Caco-2 (cell line): ENCODE measurements at regions of chr17 and their contacts with region 1.

Region 1: DNA sequence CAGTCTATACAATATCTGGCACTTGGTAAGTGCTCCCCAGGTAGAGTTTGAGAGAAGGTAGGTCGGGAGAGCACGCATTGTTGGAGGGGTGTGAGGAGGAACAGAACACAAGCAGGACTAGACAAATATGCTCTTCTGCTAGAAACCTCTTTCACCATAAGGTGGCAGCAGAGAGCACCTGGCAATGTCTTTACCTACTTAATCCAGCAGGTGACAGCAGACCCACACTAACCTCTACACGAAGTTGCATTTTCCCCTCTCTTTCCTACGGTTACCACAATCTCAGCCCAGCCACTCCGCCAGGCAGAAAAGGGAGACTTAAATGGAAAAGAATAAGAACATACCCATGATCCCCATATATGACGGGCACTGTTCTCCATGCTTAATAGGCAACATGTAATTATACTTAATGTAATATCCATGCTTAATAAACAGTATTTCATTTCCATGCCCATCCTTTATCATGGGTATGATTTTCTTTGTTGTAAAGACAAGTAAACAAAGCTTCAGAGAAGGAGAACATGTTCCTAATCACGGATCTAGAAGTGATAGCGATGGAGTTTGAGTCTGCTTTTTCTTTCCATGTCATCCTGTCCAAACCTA is 55.1 kb upstream of the CCL2 start:
- DNase-seq: peak; percentile 73 to 82
- H3K4me3 ChIP-seq: no peak overlapping the region
- H3K4me3 Mint-ChIP-seq: no peak overlapping the region
- H3K27ac Mint-ChIP-seq: no peak overlapping the region
- H3K4me1 ChIP-seq: no peaks in the 10 kb centered on the region
- H3K4me1 Mint-ChIP-seq: no peaks in the 10 kb centered on the region
- H3K27me3 ChIP-seq: no peaks in the 10 kb centered on the region; the same call in 1 of the 2 replicates
- H3K27me3 Mint-ChIP-seq: peaks cover 13% of the 10 kb centered on the region
- CTCF ChIP-seq: peak; percentile 100

Region 2: DNA sequence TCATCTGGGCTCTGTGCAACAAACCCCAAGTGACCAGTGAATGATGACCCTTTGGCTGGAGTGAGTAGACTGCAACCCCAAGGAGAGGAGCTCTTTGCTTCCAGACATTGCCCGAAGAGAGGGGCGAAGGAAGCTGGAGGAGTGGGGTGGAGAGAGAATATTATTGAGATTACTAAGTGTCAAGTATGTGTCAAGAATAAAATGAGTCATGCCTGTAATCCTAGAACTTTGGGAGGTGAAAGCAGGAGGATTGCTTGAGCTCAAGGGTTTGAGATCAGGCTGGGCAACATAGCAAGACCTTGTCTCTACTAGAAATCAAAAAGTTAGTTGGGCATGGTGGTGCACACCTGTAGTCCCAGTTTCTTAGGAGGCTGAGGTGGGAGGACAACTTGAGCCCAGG is 86.9 kb before region 1 on chr17:
- CTCF ChIA-PET with region 1: no interaction called
- POLR2A ChIA-PET with region 1: no interaction called
- intact Hi-C with region 1: no loop called
- DNase-seq: no peak
- H3K4me3 ChIP-seq: no peak overlapping the region
- H3K4me3 Mint-ChIP-seq: no peak overlapping the region
- H3K27ac Mint-ChIP-seq: no peak overlapping the region
- H3K4me1 ChIP-seq: no peaks in the 10 kb centered on the region
- H3K4me1 Mint-ChIP-seq: no peaks in the 10 kb centered on the region
- H3K27me3 ChIP-seq: peaks cover 2% of the 10 kb centered on the region
- H3K27me3 Mint-ChIP-seq: peaks cover 29% of the 10 kb centered on the region
- CTCF ChIP-seq: no peak

Region 3: DNA sequence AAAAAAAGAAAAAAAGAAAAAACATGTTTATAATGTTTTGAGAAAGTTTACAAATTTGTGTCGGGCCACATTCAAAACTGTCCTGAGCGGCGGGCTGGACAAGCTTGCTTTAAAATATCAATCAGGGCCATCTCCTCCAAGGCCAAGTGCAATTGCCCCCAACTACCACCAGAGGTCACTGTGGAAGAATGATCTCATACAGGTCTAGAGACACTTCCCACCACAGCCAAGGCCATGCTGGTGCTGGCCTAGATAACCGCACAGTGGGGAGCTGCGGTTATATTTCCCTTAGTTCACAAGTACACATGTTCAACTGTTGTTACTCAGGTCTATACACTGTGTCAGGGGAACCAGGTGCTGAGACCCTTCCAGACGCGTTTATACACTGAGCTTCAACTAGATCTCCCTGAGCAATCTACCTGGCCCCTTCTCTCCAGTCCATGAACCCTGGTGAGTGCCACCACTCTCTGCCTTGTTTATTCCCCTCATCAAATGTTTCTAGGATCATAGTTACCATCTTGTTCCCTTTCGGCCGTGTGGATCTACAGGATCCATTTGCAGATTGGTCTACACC is 28.7 kb before region 1 on chr17:
- CTCF ChIA-PET with region 1: interaction called, 4 read pairs
- POLR2A ChIA-PET with region 1: no interaction called
- intact Hi-C with region 1: loop called (anchors 1 kb)
- DNase-seq: peak; percentile 59 to 72
- H3K4me3 ChIP-seq: no peak overlapping the region
- H3K4me3 Mint-ChIP-seq: no peak overlapping the region
- H3K27ac Mint-ChIP-seq: no peak overlapping the region
- H3K4me1 ChIP-seq: no peaks in the 10 kb centered on the region
- H3K4me1 Mint-ChIP-seq: no peaks in the 10 kb centered on the region
- H3K27me3 ChIP-seq: no peaks in the 10 kb centered on the region
- H3K27me3 Mint-ChIP-seq: peaks cover 16% of the 10 kb centered on the region
- CTCF ChIP-seq: peak; percentile 81 to 95

Region 4: GRCh38 chr17:34306466-34306865 is 106.4 kb after region 1 on chr17:
- CTCF ChIA-PET with region 1: interaction called, 5 read pairs
- POLR2A ChIA-PET with region 1: no interaction called
- intact Hi-C with region 1: loop called (anchors 2 kb)
- DNase-seq: peak in 1 of 2 experiments; percentile 5
- H3K4me3 ChIP-seq: no peak overlapping the region
- H3K4me3 Mint-ChIP-seq: no peak overlapping the region
- H3K27ac Mint-ChIP-seq: no peak overlapping the region
- H3K4me1 ChIP-seq: no peaks in the 10 kb centered on the region
- H3K4me1 Mint-ChIP-seq: no peaks in the 10 kb centered on the region
- H3K27me3 ChIP-seq: no peaks in the 10 kb centered on the region; the same call in none of the 2 replicates
- H3K27me3 Mint-ChIP-seq: no peaks in the 10 kb centered on the region
- CTCF ChIP-seq: peak in 1 of 2 experiments; percentile 2